ENCODE measurements at regions of chr5 and their contacts with region 1.

Region 1: DNA sequence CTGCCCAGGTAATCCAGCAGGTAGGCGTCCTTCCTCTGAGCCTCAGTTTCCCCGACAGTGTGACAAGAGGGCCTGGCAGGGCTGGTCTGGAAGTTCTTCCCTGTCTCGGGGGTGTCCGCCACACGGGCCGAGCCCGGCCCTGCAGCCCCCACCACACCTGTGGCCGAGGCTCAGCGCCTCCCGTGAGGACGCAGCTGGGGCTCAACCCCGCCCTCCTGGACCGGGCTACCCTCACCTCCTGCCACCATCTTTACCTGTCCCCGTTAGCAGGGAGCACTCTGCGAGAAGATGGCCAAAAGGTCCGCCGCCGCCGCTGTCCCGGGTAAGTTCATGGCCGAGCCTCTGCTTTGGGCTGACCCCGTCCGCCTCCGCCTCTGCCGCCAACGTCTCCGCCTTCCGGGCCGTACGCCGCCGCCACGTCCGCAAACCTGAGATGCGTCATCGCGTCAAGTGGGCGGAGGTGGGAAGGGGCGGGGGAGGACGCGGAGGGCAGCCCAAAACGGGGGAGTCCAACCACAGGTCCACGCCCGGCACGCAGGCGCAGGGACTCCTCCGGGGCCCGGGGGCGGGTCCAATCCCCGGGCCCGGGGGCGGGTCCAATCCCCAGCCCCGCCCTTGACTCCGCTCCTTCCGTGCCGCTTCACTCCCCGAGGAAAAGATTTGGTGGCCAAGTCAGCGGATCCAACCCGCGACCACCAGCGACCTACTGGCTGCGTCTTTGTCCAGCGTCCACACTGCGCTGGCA is at the start of gene LYSMD3:
- DNase-seq: peak; percentile 95 to 97 (median 96)
- H3K4me3 ChIP-seq: peak within 1 kb of the TSS; percentile 83 to 93
- H3K4me3 Mint-ChIP-seq: peak within 1 kb of the TSS; percentile 97 to 100 (median 99)
- H3K27ac ChIP-seq: peak within 1 kb of the TSS; percentile 98
- H3K27ac Mint-ChIP-seq: peak within 1 kb of the TSS; percentile 97 to 100 (median 99)
- H3K4me1 ChIP-seq: peaks cover 35% of the 10 kb centered on the region
- H3K4me1 Mint-ChIP-seq: peaks cover 25 to 42% (median 34%) of the 10 kb centered on the region in 4 donors
- H3K27me3 ChIP-seq: no peaks in the 10 kb centered on the region
- H3K27me3 Mint-ChIP-seq: peaks cover 9 to 12% of the 10 kb centered on the region in 2 donors
- total RNA-seq, gene LYSMD3: 30.1 to 30.9 TPM

Region 2: DNA sequence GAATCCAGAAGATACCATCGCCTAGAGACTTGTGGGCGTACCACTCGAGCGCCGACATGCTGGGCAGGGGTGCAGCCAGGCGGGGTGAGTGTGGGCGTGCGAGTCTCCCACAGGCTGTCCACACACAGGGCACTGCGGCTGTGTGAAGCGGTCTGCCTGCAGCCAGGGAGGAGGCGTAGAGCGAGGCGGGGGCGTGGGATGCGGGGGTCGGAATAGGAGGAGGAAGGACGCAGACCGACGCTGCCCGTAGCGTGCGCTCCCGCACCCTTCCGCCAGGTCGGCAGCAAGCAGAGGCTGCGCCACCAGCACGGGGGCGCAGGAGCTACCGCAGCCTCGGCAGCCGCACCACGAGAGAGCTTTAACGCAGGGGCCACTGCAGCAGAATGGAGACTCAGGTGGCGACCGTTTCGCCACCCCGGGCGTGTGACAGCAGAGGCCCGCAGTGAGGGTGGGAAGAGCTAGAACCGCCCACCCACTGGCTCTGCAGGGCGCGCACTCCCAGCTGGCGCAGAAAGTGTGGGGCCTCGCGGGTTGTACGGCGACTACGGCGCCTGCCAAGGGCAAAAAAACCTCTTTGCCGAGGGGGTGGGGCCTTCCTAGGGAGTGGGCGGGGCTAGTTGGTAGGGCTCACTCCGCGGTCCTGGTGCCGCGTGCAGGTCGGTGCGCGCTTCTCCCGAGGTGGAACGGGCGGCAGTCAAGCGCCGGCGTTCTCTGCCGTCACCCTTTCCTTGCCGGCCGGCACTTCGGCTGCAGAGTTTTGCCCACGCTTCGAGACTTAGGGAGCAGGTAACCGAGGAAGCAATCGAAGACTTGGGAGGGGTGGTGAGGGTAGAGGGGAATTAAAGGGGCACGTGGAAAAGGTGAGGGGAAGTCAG is 54.9 kb before region 1 on chr5 and contains the starts of genes MBLAC2 and POLR3G:
- CTCF ChIA-PET with region 1: interaction called, 45 read pairs
- POLR2A ChIA-PET with region 1: interaction called, 50 read pairs
- intact Hi-C with region 1: loop called (anchors 1 kb)
- DNase-seq: peak; percentile 91 to 93 (median 92)
- H3K4me3 ChIP-seq: peak within 1 kb of the TSS; percentile 79 to 87
- H3K4me3 Mint-ChIP-seq: peak within 1 kb of the TSS; percentile 95 to 99 (median 99)
- H3K27ac ChIP-seq: peak within 1 kb of the TSS; percentile 66
- H3K27ac Mint-ChIP-seq: peak within 1 kb of the TSS; percentile 84 to 98 (median 95)
- H3K4me1 ChIP-seq: peaks cover 35% of the 10 kb centered on the region
- H3K4me1 Mint-ChIP-seq: peaks cover 24 to 46% (median 35%) of the 10 kb centered on the region in 4 donors
- H3K27me3 ChIP-seq: no peaks in the 10 kb centered on the region
- H3K27me3 Mint-ChIP-seq: no peaks in the 10 kb centered on the region
- total RNA-seq, gene MBLAC2: 14.7 to 16.1 TPM
- total RNA-seq, gene POLR3G: 1.2 to 1.5 TPM

Region 3: DNA sequence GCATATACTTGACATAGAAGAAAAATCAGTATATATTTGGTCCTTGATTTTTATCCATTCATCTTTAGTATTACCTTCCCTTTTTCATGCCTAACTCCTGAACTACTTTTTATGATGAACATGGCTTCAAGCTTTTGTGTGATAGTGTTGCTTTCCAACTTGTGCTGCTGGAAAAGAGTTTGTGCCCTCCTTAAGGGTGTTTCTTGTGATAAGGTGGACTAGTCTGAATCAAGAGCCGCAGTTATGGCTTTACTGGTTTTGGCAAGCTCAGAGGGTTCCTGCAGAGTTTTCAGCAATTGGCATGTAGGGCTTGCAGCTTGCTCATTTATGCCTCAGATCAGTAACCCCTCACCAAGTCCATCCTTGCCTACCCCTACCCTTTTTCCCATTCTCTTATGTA is 34.2 kb before region 1 on chr5:
- CTCF ChIA-PET with region 1: no interaction called
- POLR2A ChIA-PET with region 1: no interaction called
- intact Hi-C with region 1: no loop called
- DNase-seq: no peak
- H3K4me3 ChIP-seq: no peak overlapping the region
- H3K4me3 Mint-ChIP-seq: no peak overlapping the region
- H3K27ac ChIP-seq: no peak overlapping the region
- H3K27ac Mint-ChIP-seq: no peak overlapping the region
- H3K4me1 ChIP-seq: no peaks in the 10 kb centered on the region
- H3K4me1 Mint-ChIP-seq: no peaks in the 10 kb centered on the region
- H3K27me3 ChIP-seq: no peaks in the 10 kb centered on the region
- H3K27me3 Mint-ChIP-seq: no peaks in the 10 kb centered on the region

Region 4: GRCh38 chr5:90558344-90559192 is 29.2 kb after region 1 on chr5 and contains the start of gene ADGRV1:
- CTCF ChIA-PET with region 1: no interaction called
- POLR2A ChIA-PET with region 1: no interaction called
- intact Hi-C with region 1: no loop called
- DNase-seq: peak in 2 of 5 donors; percentile 3 to 31
- H3K4me3 ChIP-seq: peak within 1 kb of the TSS in 1 of 2 donors; percentile 6
- H3K4me3 Mint-ChIP-seq: peak within 1 kb of the TSS; percentile 49 to 84 (median 70)
- H3K27ac ChIP-seq: no peak within 1 kb of the TSS
- H3K27ac Mint-ChIP-seq: no peak within 1 kb of the TSS
- H3K4me1 ChIP-seq: peaks cover 6% of the 10 kb centered on the region
- H3K4me1 Mint-ChIP-seq: peaks cover 5 to 10% (median 9%) of the 10 kb centered on the region in 4 donors
- H3K27me3 ChIP-seq: peaks cover 8% of the 10 kb centered on the region
- H3K27me3 Mint-ChIP-seq: peaks cover 37 to 45% of the 10 kb centered on the region in 2 donors
- total RNA-seq, gene ADGRV1: 0.09 to 0.22 TPM